BJ (cell line): ENCODE measurements at regions of chrX and their contacts with region 1.

Region 1: GRCh38 chrX:24828147-24828546 is 134.4 kb downstream of the POLA1 start:
- DNase-seq: no peak
- H3K4me3 ChIP-seq: no peak overlapping the region
- H3K27me3 ChIP-seq: no peaks in the 10 kb centered on the region
- CTCF ChIP-seq: no peak

Region 2: DNA sequence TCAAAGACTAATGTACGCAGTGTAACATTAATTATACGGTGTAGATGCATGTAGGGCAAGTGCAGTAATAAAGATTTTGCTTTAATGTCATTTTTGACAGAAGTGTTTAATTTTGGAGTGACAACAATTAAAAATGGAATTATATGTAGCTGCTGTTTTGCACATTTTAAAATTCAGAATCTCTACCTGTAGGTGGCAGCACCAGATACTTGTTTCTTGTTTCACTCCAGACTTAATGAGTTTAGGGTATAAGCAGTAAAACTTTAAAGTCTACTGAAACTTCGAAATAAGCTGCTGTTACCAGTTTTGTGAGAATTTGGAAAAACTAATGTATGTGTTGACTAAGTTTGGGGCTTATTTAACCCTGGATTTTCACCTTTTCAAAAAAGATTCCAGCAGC is 10.5 kb after region 1 on chrX:
- CTCF ChIA-PET with region 1: interaction called, 14 read pairs
- POLR2A ChIA-PET with region 1: no interaction called
- DNase-seq: no peak
- H3K4me3 ChIP-seq: no peak overlapping the region
- H3K27me3 ChIP-seq: no peaks in the 10 kb centered on the region
- CTCF ChIP-seq: no peak; the same call in 1 of the 2 replicates

Region 3: GRCh38 chrX:25241461-25241860 is 413.3 kb after region 1 on chrX:
- CTCF ChIA-PET with region 1: no interaction called
- POLR2A ChIA-PET with region 1: no interaction called
- DNase-seq: no peak
- H3K4me3 ChIP-seq: no peak overlapping the region
- H3K27me3 ChIP-seq: no peaks in the 10 kb centered on the region
- CTCF ChIP-seq: no peak